ENCODE measurements at regions of chr1 and their contacts with region 1.

Region 1: GRCh38 chr1:7646981-7647901 is 123.9 kb upstream of the VAMP3 start:
- DNase-seq: peak; percentile 75 to 78 (median 78)
- ATAC-seq: peak; percentile 58 to 70 (median 68)
- H3K4me3 ChIP-seq: no peak overlapping the region
- H3K27ac ChIP-seq: no peak overlapping the region
- H3K4me1 ChIP-seq: peaks cover 0 to 24% (median 2%) of the 10 kb centered on the region in 4 donors
- H3K27me3 ChIP-seq: no peaks in the 10 kb centered on the region
- CTCF ChIP-seq: peak; percentile 88 to 91 (median 90)
- POLR2A ChIP-seq: no peak

Region 2: DNA sequence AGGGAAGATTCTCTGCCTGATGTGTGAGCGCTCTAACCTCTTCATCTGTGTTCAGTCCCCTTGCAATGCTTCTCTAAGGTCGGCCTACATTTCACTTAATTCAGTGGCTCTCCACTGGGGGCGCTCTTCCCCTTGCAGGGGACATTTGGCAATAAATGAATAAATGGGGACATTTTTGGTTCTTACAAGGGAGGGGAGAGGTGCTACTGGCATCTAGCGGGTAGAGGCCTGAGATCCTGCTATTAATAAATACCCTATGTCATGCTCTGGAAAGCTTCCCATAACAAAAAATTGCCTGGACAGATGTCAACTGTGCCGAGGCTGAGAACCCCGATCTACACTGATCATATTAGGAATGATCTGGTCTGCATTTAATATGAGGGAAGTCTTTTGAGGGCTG is 919.7 kb before region 1 on chr1:
- intact Hi-C with region 1: loop called in 1 of 2 experiments (anchors 10 kb)
- DNase-seq: peak in 2 of 3 donors; percentile 47 to 52
- ATAC-seq: peak; percentile 71 to 75 (median 72)
- H3K4me3 ChIP-seq: no peak overlapping the region
- H3K27ac ChIP-seq: no peak overlapping the region
- H3K4me1 ChIP-seq: no peaks in the 10 kb centered on the region
- H3K27me3 ChIP-seq: no peaks in the 10 kb centered on the region
- CTCF ChIP-seq: peak; percentile 71 to 89 (median 83)
- POLR2A ChIP-seq: no peak

Region 3: DNA sequence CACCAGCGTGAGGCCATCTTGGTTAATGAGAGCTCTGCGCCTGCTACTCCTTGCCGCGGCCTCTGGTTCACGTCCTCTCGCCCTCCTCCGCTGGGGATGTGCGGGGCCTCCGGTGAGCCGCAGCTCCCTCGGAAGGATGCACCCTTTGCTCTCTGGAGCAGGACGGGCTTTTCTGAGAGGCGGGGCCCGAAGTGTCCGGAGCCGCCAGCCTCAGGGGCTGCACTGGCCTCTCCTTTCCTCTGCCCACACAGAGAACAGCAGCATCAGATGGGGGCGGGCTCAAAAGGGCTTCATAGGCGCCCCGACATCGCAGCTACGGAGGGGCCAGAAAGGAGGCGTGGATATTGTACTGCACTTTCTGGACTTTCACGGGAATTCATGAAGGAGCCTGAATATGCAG is 577.3 kb before region 1 on chr1:
- intact Hi-C with region 1: loop called in 1 of 2 experiments (anchors 10 kb)
- DNase-seq: no peak
- ATAC-seq: peak; percentile 32 to 71 (median 50)
- H3K4me3 ChIP-seq: peak overlapping the region; percentile 15 to 36 (median 26)
- H3K27ac ChIP-seq: no peak overlapping the region
- H3K4me1 ChIP-seq: peaks cover 0 to 4% (median 0%) of the 10 kb centered on the region in 4 donors
- H3K27me3 ChIP-seq: no peaks in the 10 kb centered on the region
- CTCF ChIP-seq: no peak
- POLR2A ChIP-seq: no peak

Region 4: DNA sequence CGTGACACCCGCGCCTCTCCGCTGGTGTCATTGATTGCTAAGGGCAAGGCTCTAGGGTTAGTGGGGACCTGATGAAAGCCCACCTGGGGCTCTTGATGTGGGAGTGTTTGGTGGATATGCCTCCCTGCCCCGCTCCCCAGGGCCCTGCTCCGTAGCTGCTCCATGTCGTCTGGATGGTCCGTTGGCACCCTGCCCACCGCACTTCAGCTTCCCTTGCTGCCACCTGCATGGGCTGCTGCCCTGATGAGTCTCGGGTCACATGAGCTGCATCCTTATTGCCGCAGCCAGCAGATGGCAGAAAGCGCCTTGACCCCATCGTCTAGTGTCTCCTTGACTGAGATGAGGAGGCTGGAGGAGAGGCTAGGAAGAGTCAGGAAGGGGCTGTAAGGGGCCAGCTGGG is 422.6 kb before region 1 on chr1:
- intact Hi-C with region 1: loop called (anchors 10 kb)
- DNase-seq: no peak
- ATAC-seq: peak in 3 of 4 donors; percentile 33 to 47 (median 43)
- H3K4me3 ChIP-seq: no peak overlapping the region
- H3K27ac ChIP-seq: no peak overlapping the region
- H3K4me1 ChIP-seq: no peaks in the 10 kb centered on the region
- H3K27me3 ChIP-seq: no peaks in the 10 kb centered on the region
- CTCF ChIP-seq: peak; percentile 11 to 20 (median 14)
- POLR2A ChIP-seq: no peak

Region 5: DNA sequence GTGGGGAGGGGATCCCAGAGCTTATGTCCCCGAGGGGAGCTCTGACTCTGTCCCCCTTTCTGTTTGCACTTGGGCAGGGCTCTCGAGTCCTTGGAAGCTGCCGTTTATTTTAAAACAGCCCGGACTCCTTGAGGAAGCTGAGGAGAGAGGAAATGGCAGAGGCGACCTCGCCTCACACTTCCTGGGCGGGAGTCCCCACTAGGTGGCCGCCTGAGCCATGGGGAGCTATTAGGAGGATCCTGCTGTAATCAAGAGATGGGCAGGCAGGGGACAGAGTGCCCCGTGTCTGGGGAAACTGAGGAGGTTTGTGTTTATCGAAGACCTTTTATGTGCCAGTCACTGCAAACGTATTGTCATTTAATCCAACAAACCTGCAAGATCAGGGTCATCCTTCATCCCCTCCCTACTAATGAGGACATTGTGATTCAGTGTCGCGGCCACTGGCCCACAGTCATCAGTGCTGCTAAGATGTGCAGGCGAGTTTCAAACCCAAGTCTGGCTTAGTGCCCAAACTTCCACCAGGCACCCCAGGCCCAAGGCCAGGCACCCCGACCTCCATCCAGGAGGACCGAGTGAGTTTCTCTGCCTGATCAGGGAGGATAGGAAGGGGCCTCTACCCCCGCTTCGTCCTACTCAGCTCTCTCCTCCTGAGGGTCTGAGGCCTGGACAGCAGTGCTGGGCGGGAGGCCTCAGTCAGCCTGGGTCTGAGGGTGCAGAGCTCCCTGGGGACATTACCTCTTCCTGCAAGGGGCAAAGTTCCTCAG is 193.0 kb before region 1 on chr1:
- intact Hi-C with region 1: loop called in 1 of 2 experiments (anchors 10 kb)
- DNase-seq: no peak
- ATAC-seq: peak; percentile 37 to 78 (median 50)
- H3K4me3 ChIP-seq: no peak overlapping the region
- H3K27ac ChIP-seq: no peak overlapping the region
- H3K4me1 ChIP-seq: no peaks in the 10 kb centered on the region
- H3K27me3 ChIP-seq: no peaks in the 10 kb centered on the region
- CTCF ChIP-seq: peak; percentile 46 to 51 (median 46)
- POLR2A ChIP-seq: no peak

Region 6: GRCh38 chr1:7856345-7856744 is 209.1 kb after region 1 on chr1:
- intact Hi-C with region 1: no loop called
- DNase-seq: no peak
- ATAC-seq: peak in 3 of 4 donors; percentile 23 to 55 (median 48)
- H3K4me3 ChIP-seq: no peak overlapping the region
- H3K27ac ChIP-seq: no peak overlapping the region
- H3K4me1 ChIP-seq: no peaks in the 10 kb centered on the region
- H3K27me3 ChIP-seq: no peaks in the 10 kb centered on the region
- CTCF ChIP-seq: peak in 1 of 4 donors; percentile 7
- POLR2A ChIP-seq: no peak

Measured in right lobe of liver (tissue), 6 donors.